Adrenal gland (tissue), 19 donors: ENCODE measurements at regions of chr1 and their contacts with region 1.

Region 1: GRCh38 chr1:19651141-19651737 is 7.1 kb downstream of the NBL1 start:
- DNase-seq: peak; percentile 59 to 77 (median 68)
- H3K4me3 ChIP-seq: no peak overlapping the region
- H3K27ac ChIP-seq: peak overlapping the region in 2 of 5 donors; percentile 54 to 78
- H3K4me1 ChIP-seq: peaks cover 0 to 17% of the 10 kb centered on the region in 2 donors
- H3K27me3 ChIP-seq: no peaks in the 10 kb centered on the region
- CTCF ChIP-seq: peak; percentile 42 to 81 (median 72)
- POLR2A ChIP-seq: no peak

Region 2: GRCh38 chr1:19260211-19261138 is 390.8 kb before region 1 on chr1:
- intact Hi-C with region 1: loop called in 1 of 2 experiments (anchors 10 kb)
- DNase-seq: peak in 3 of 7 donors; percentile 30 to 63 (median 46)
- H3K4me3 ChIP-seq: no peak overlapping the region
- H3K27ac ChIP-seq: no peak overlapping the region
- H3K4me1 ChIP-seq: no peaks in the 10 kb centered on the region
- H3K27me3 ChIP-seq: no peaks in the 10 kb centered on the region
- CTCF ChIP-seq: no peak
- POLR2A ChIP-seq: no peak

Region 3: GRCh38 chr1:19341201-19342072 is 309.8 kb before region 1 on chr1:
- intact Hi-C with region 1: loop called (anchors 2 to 5 kb)
- DNase-seq: peak; percentile 68 to 90 (median 79)
- H3K4me3 ChIP-seq: no peak overlapping the region
- H3K27ac ChIP-seq: no peak overlapping the region
- H3K4me1 ChIP-seq: peaks cover 0 to 7% of the 10 kb centered on the region in 2 donors
- H3K27me3 ChIP-seq: no peaks in the 10 kb centered on the region
- CTCF ChIP-seq: peak; percentile 81 to 95 (median 85)
- POLR2A ChIP-seq: no peak

Region 4: DNA sequence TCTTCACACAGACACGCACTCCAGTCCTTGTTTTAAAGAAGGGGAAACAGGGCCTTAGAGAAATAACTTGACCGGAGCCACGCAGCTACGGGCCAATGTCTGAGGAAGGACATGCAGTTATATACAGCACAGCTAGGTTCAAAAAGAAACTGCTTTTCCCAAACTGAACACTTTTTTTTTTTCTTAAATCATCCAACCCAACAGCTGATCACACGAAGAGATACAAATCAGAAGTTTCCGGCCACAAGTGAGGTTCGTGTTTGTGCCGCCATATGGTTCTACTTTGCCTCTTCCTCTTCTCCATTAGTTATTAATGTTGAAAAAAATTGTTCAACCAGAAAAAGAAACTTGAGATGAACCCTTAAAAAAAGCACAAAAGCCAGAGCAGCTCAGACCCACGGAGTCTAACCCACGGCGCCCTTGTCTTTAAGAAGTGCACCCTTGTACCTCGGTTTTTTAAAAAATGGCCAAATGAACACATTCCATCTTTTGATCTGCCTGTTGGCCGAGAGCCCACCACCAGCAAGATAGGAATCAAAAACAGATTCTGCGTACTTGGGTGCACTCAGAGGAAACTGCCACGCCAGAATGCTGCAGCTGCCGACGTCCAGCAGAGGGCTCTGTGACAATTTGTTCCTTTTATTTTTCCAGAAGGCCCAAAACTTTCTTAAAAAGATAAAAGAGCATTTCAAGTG is 260.2 kb before region 1 on chr1:
- intact Hi-C with region 1: loop called in 1 of 2 experiments (anchors 5 kb)
- DNase-seq: peak; percentile 58 to 90 (median 75)
- H3K4me3 ChIP-seq: peak overlapping the region in 1 of 4 donors; percentile 24
- H3K27ac ChIP-seq: peak overlapping the region; percentile 39 to 87 (median 52)
- H3K4me1 ChIP-seq: peaks cover 13 to 35% of the 10 kb centered on the region in 2 donors
- H3K27me3 ChIP-seq: no peaks in the 10 kb centered on the region
- CTCF ChIP-seq: peak; percentile 64 to 92 (median 82)
- POLR2A ChIP-seq: no peak

Region 5: GRCh38 chr1:19485362-19486187 is 165.7 kb before region 1 on chr1 and contains the start of gene CAPZB:
- intact Hi-C with region 1: loop called (anchors 10 kb)
- DNase-seq: peak; percentile 90 to 97 (median 96)
- H3K4me3 ChIP-seq: peak within 1 kb of the TSS; percentile 30 to 98 (median 86)
- H3K27ac ChIP-seq: peak within 1 kb of the TSS; percentile 67 to 100 (median 95)
- H3K4me1 ChIP-seq: peaks cover 17 to 58% of the 10 kb centered on the region in 2 donors
- H3K27me3 ChIP-seq: no peaks in the 10 kb centered on the region
- CTCF ChIP-seq: peak in 1 of 6 experiments; percentile 18
- POLR2A ChIP-seq: peak; percentile 76 to 86
- total RNA-seq, gene CAPZB: 99.7 to 386 (median 154) TPM

Region 6: DNA sequence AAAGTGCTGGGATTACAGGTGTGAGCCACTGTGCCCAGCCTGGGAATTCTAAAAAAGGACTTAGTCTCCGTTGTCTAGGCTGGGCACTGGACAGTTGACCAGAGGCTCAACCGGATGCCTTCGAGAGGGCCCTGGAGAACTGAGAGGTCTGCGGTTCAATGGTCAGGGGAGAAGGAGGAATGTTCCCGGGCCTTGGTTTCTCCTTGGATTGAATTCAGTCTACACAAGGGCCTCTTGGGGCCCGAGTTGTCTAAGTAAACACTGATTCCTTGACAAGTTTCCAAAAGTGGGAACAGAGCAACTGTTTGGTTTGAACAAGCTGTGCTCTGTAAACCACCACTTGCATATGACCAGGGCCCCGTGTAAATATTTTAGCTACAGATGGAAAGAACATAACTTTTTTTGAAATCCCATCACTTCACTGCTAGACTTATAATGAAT is 136.8 kb before region 1 on chr1:
- intact Hi-C with region 1: loop called in 1 of 2 experiments (anchors 10 kb)
- DNase-seq: peak in 1 of 7 donors; percentile 26
- H3K4me3 ChIP-seq: no peak overlapping the region
- H3K27ac ChIP-seq: peak overlapping the region in 2 of 5 donors; percentile 26
- H3K4me1 ChIP-seq: peaks cover 0 to 1% of the 10 kb centered on the region in 2 donors
- H3K27me3 ChIP-seq: no peaks in the 10 kb centered on the region
- CTCF ChIP-seq: no peak
- POLR2A ChIP-seq: no peak

Region 7: DNA sequence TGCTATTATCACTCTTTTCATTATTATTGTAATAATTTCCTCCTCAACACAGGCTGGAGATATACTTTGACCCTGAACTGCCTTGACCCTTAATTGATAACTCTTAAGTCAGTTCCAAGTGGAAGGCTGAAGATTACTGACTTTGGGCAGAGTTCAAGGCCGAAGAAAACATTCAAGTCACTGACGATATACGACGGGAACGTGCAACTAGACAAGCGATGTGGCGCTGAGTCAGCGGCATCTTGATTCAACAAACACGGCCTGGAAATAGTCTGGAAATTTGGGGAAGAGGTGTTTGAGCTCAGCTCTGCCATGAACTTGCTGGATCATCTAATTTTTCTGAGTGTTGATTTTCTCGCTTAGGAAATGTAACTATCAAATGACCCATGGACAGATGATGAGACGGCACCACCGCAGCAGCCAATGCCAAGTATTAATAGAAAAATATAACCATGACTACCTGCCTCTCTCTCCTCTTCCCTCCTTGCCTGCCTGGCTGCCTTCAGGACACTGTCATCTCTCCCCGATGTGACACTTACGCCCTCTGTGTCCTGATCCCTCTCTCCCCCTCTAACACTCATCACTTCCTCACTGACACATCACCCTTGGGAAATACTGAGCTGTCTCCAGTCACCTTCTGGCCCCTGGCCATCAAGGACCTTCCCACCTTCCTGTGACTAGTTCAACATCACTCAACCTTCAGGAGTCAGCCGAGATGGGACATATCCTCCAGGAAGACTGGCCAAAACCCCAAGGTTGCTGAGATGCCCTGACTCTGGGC is 99.1 kb after region 1 on chr1:
- intact Hi-C with region 1: no loop called
- DNase-seq: peak in 3 of 7 donors; percentile 48 to 57 (median 51)
- H3K4me3 ChIP-seq: no peak overlapping the region
- H3K27ac ChIP-seq: no peak overlapping the region
- H3K4me1 ChIP-seq: peaks cover 0 to 8% of the 10 kb centered on the region in 2 donors
- H3K27me3 ChIP-seq: no peaks in the 10 kb centered on the region
- CTCF ChIP-seq: no peak
- POLR2A ChIP-seq: no peak